Thyroid gland (tissue), 4 donors: ENCODE measurements at regions of chrX and their contacts with region 1.

Region 1: GRCh38 chrX:1453951-1454785 is 1.5 kb upstream of the ASMTL start:
- DNase-seq: peak; percentile 82 to 83
- H3K4me3 ChIP-seq: peak overlapping the region in 1 of 3 donors; percentile 15
- H3K27ac ChIP-seq: peak overlapping the region in 1 of 3 donors; percentile 48
- H3K4me1 ChIP-seq: peaks cover 11% of the 10 kb centered on the region in 2 donors
- H3K27me3 ChIP-seq: no peaks in the 10 kb centered on the region
- CTCF ChIP-seq: peak; percentile 71 to 99 (median 93)
- POLR2A ChIP-seq: no peak

Region 2: GRCh38 chrX:1391707-1392375 is 62.3 kb before region 1 on chrX and contains the start of gene SLC25A6:
- intact Hi-C with region 1: loop called (anchors 5 kb)
- DNase-seq: peak; percentile 99
- H3K4me3 ChIP-seq: peak within 1 kb of the TSS; percentile 90 to 98 (median 97)
- H3K27ac ChIP-seq: peak within 1 kb of the TSS; percentile 95 to 99 (median 98)
- H3K4me1 ChIP-seq: peaks cover 33 to 39% of the 10 kb centered on the region in 2 donors
- H3K27me3 ChIP-seq: no peaks in the 10 kb centered on the region
- CTCF ChIP-seq: peak in 2 of 6 experiments; percentile 19 to 43
- POLR2A ChIP-seq: peak; percentile 69 to 95
- total RNA-seq, gene SLC25A6: 219 to 397 (median 320) TPM

Region 3: GRCh38 chrX:1576201-1576992 is 122.2 kb after region 1 on chrX:
- intact Hi-C with region 1: loop called (anchors 5 kb)
- DNase-seq: no peak
- H3K4me3 ChIP-seq: no peak overlapping the region
- H3K27ac ChIP-seq: no peak overlapping the region
- H3K4me1 ChIP-seq: no peaks in the 10 kb centered on the region
- H3K27me3 ChIP-seq: no peaks in the 10 kb centered on the region
- CTCF ChIP-seq: no peak
- POLR2A ChIP-seq: no peak

Region 4: GRCh38 chrX:1591102-1591900 is 137.1 kb after region 1 on chrX and contains the start of gene AKAP17A:
- intact Hi-C with region 1: loop called (anchors 2 kb)
- DNase-seq: peak; percentile 93 to 96
- H3K4me3 ChIP-seq: peak within 1 kb of the TSS; percentile 78 to 88 (median 87)
- H3K27ac ChIP-seq: peak within 1 kb of the TSS; percentile 62 to 65 (median 62)
- H3K4me1 ChIP-seq: peaks cover 4 to 10% of the 10 kb centered on the region in 2 donors
- H3K27me3 ChIP-seq: no peaks in the 10 kb centered on the region
- CTCF ChIP-seq: peak in 1 of 6 experiments; percentile 5
- POLR2A ChIP-seq: peak in 1 of 2 donors; percentile 80
- total RNA-seq, gene AKAP17A: 56.7 to 82.6 (median 63.1) TPM

Region 5: DNA sequence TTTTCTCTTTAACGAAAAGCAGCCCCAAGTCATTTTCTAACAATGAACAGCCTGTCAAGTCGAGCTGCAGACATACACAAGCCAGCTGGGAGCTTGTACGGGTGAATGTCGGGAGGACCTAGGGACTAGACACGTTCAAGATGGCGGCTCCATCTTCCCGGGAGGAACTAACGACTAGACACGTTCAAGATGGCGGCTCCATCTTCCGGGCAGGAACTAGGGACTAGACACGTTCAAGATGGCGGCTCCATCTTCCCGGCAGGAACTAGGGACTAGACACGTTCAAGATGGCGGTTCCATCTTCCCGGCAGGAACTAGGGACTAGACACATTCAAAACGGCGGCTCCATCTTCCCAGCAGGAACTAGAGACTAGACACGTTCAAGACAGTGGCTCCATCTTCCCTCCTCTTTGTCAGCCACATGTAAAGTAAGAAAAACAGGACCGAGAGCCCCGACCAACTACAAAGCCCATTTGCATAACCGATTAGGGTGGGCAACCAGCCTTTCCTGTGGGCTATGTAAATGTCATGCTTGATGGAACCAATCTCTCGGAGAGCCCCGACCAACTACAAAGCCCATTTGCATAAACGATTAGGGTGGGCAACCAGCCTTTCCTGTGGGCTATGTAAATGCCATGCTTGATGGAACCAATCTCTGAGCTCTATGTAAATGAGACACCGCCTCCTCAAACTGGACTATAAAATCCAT is 871.1 kb after region 1 on chrX:
- intact Hi-C with region 1: loop called (anchors 10 kb)
- DNase-seq: peak; percentile 38 to 83
- H3K4me3 ChIP-seq: peak overlapping the region in 1 of 3 donors; percentile 38
- H3K27ac ChIP-seq: no peak overlapping the region
- H3K4me1 ChIP-seq: peaks cover 7 to 9% of the 10 kb centered on the region in 2 donors
- H3K27me3 ChIP-seq: no peaks in the 10 kb centered on the region
- CTCF ChIP-seq: no peak
- POLR2A ChIP-seq: peak in 1 of 2 donors; percentile 50

Region 6: GRCh38 chrX:2608638-2609430 is 1154.7 kb after region 1 on chrX:
- intact Hi-C with region 1: loop called (anchors 10 kb)
- DNase-seq: peak; percentile 87 to 89
- H3K4me3 ChIP-seq: peak overlapping the region; percentile 63 to 91 (median 90)
- H3K27ac ChIP-seq: peak overlapping the region; percentile 45 to 76 (median 63)
- H3K4me1 ChIP-seq: peaks cover 5 to 15% of the 10 kb centered on the region in 2 donors
- H3K27me3 ChIP-seq: no peaks in the 10 kb centered on the region
- CTCF ChIP-seq: no peak
- POLR2A ChIP-seq: peak in 1 of 2 donors; percentile 59

Region 7: DNA sequence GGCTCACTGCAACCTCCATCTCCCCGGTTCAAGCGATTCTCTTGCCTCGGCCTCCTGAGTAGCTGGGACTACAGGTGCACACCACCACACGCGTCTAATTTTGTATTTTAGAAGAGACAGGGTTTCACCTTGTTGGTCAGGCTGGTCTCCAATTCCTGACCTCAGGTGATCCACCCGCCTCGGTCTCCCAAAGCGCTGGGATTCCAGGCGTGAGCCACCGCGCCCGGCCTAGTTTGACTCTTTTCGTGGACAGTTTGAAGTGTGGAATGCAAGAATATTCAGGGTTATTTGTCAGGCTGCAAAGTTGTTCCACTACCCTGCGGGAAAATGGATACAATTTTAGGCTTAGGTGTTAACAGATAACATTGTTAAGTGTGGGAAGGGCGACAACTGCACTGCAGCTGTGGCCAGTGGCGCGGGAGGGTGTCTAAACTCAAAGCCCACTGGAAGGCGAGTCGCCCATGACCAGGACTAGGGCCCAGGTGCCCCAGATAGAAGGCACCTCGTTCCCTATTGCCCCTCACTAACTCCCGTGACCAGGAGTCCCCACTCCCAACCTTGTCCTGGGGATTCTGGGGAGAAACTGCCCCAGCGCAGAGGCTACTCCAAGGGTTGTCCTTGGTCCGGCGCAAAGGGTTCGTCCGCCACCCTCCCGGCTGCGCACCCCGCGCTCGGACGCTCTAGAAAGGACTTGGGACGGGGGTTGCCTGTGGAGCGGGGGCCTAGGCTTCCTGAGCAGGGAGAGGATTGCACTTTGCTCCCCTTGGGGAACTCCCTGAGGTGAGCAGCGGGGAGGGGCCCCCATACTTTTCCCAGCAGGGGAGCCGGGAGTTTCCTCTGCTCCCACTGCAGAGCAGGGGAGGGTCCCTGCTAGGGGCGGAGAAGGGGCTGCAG is 1235.9 kb after region 1 on chrX:
- intact Hi-C with region 1: loop called (anchors 5 kb)
- DNase-seq: peak in 1 of 2 donors; percentile 38
- H3K4me3 ChIP-seq: peak overlapping the region in 1 of 3 donors; percentile 68
- H3K27ac ChIP-seq: no peak overlapping the region
- H3K4me1 ChIP-seq: peaks cover 13 to 32% of the 10 kb centered on the region in 2 donors
- H3K27me3 ChIP-seq: no peaks in the 10 kb centered on the region
- CTCF ChIP-seq: no peak
- POLR2A ChIP-seq: no peak